ENCODE measurements at regions of chr2 and their contacts with region 1.

Region 1: GRCh38 chr2:135797497-135798274 is 39.3 kb downstream of the LCT start:
- DNase-seq: peak; percentile 74 to 80
- H3K4me3 ChIP-seq: no peak overlapping the region
- H3K4me3 Mint-ChIP-seq: no peak overlapping the region
- H3K27ac Mint-ChIP-seq: peak overlapping the region; percentile 11
- H3K4me1 ChIP-seq: no peaks in the 10 kb centered on the region
- H3K4me1 Mint-ChIP-seq: no peaks in the 10 kb centered on the region
- H3K27me3 ChIP-seq: no peaks in the 10 kb centered on the region
- H3K27me3 Mint-ChIP-seq: no peaks in the 10 kb centered on the region
- CTCF ChIP-seq: peak; percentile 91 to 95

Region 2: DNA sequence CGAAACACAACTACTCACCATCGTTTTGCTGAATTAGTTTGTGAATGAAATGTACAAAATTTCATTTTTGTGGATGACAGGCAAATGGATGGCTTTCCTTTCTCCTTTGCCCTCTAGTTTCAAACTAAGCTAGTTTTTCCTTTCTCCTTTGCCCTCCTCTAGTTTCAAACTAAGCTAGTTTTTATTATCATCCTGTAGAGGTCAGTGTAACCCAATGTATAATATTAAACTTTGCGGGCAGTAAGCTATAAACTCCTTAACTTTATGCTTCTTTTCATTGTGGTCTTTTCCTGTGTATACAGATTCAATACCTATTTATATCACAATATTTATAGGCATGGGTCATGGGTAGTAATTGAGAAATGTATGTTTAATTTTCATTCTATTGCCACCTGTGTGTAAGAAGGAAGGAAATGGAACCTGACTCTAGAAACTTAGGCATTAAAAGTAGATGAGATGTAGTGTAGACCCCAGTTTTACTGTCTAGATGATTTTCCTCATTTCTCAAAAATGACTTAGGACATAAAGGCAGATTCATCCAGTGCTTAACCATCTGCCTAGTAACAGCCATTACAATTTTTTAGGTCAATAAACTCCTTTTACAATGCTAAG is 808.6 kb before region 1 on chr2:
- CTCF ChIA-PET with region 1: interaction called, 14 read pairs
- POLR2A ChIA-PET with region 1: no interaction called
- intact Hi-C with region 1: loop called (anchors 1 kb)
- DNase-seq: peak in 1 of 2 experiments; percentile 7
- H3K4me3 ChIP-seq: no peak overlapping the region
- H3K4me3 Mint-ChIP-seq: no peak overlapping the region
- H3K27ac Mint-ChIP-seq: no peak overlapping the region
- H3K4me1 ChIP-seq: no peaks in the 10 kb centered on the region
- H3K4me1 Mint-ChIP-seq: no peaks in the 10 kb centered on the region
- H3K27me3 ChIP-seq: no peaks in the 10 kb centered on the region
- H3K27me3 Mint-ChIP-seq: peaks cover 16% of the 10 kb centered on the region
- CTCF ChIP-seq: peak; percentile 40 to 53

Region 3: DNA sequence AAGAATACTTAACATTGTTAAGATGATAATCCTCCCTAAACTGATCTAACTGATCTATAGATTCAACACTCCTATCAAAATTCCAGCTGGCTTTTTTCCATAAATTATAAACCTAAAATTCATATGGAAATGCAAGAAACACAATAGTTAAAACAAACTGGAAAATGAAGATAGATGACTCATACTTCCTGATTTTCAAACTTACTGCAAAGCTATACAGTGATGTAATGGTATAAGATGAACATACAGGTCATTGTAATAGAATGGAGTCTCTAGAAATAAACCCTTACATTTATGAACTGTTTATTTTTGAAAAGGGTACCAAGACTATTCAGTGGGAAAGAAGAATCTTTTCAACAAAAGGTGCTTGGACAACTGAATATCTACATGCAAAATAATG is 23.8 kb before region 1 on chr2:
- CTCF ChIA-PET with region 1: no interaction called
- POLR2A ChIA-PET with region 1: no interaction called
- intact Hi-C with region 1: no loop called
- DNase-seq: no peak
- H3K4me3 ChIP-seq: no peak overlapping the region
- H3K4me3 Mint-ChIP-seq: no peak overlapping the region
- H3K27ac Mint-ChIP-seq: no peak overlapping the region
- H3K4me1 ChIP-seq: no peaks in the 10 kb centered on the region
- H3K4me1 Mint-ChIP-seq: no peaks in the 10 kb centered on the region
- H3K27me3 ChIP-seq: no peaks in the 10 kb centered on the region
- H3K27me3 Mint-ChIP-seq: no peaks in the 10 kb centered on the region
- CTCF ChIP-seq: no peak

Region 4: DNA sequence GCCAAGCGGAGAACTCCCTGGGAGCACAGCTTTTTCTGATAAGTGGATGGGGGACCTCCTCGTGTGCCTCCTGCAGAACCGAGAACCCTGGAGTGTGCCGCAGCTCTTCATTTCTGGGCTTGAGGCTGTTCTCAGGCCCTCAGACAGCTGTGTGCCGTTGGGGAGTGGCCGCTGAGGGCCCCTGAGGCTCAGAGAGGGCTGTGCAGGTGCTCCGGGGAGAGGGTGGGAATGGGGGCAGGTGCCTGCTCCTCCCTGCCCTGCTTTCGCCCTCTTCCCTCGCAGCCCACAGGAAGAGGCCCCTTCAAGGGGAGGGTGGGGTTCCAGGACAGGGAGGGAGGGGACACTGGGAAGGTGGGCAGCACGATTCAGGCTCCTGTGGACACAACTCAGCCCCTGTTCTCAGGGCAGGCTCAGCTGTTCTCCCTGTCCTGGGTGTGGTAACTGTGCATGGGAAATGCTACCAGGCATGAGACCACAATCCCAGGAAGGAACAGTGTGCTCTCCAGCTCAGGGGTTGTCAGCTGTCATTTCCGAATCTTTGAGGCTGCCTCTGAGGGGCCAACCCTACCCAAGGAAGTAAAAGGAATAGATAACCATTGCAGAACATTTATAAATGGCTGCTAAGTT is 28.0 kb after region 1 on chr2:
- CTCF ChIA-PET with region 1: no interaction called
- POLR2A ChIA-PET with region 1: no interaction called
- intact Hi-C with region 1: no loop called
- DNase-seq: no peak
- H3K4me3 ChIP-seq: no peak overlapping the region
- H3K4me3 Mint-ChIP-seq: no peak overlapping the region
- H3K27ac Mint-ChIP-seq: no peak overlapping the region
- H3K4me1 ChIP-seq: peaks cover 15% of the 10 kb centered on the region
- H3K4me1 Mint-ChIP-seq: peaks cover 11% of the 10 kb centered on the region
- H3K27me3 ChIP-seq: no peaks in the 10 kb centered on the region
- H3K27me3 Mint-ChIP-seq: no peaks in the 10 kb centered on the region
- CTCF ChIP-seq: no peak

Region 5: GRCh38 chr2:136384531-136385303 is 587.0 kb after region 1 on chr2:
- CTCF ChIA-PET with region 1: no interaction called
- POLR2A ChIA-PET with region 1: no interaction called
- intact Hi-C with region 1: loop called (anchors 10 kb)
- DNase-seq: peak in 1 of 2 experiments; percentile 24
- H3K4me3 ChIP-seq: no peak overlapping the region
- H3K4me3 Mint-ChIP-seq: no peak overlapping the region
- H3K27ac Mint-ChIP-seq: no peak overlapping the region
- H3K4me1 ChIP-seq: no peaks in the 10 kb centered on the region
- H3K4me1 Mint-ChIP-seq: no peaks in the 10 kb centered on the region
- H3K27me3 ChIP-seq: no peaks in the 10 kb centered on the region
- H3K27me3 Mint-ChIP-seq: peaks cover 4% of the 10 kb centered on the region
- CTCF ChIP-seq: peak; percentile 40 to 65